Sciatic nerve (tissue), 2 donors: ENCODE measurements at regions of chr11 and their contacts with region 1.

Region 1: GRCh38 chr11:112724496-112724790 is 236.8 kb upstream of the NCAM1 start:
- DNase-seq: no peak
- ATAC-seq: no peak

Region 2: GRCh38 chr11:112665291-112665690 is 59.2 kb before region 1 on chr11:
- intact Hi-C with region 1: loop called (anchors 10 kb)
- DNase-seq: no peak
- ATAC-seq: no peak

Region 3: DNA sequence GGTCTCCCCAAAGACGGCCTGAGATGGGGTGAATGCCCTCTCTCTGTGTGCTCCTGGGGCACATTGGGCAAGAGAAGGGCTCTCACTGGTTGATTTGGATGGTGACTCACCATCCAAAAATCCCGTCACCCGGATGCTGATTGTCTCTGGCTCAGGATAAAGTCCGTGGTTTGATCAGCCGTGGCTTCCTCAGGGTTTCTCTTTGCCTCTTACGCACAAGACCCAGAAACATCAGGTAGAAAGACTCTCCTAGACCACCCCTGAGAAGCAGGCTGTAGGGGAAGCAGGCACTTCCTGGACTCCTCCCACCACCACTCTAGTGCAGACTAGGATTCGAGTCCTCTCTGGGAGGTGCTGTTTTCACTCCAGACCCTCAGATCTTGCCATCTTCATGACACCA is 60.7 kb after region 1 on chr11:
- intact Hi-C with region 1: no loop called
- DNase-seq: no peak
- ATAC-seq: peak; percentile 78

Region 4: DNA sequence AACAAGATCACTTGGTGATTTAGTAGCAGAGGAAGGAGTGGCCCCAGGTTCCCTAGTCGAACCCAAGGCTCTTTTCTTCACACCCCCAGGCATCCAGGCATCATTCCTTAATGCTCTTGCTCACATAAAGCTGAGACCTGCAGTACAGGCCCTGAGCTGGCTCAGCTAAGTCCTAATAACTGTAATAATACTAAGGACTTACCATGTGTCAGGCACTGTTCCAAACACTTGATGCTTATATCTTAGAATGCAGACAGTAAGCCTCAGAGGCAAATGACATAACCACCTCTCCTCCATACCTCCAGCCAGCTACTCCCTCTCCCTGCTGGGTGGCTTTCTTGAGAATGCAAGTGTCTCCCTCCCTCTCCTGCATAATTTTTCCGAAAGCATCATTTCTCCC is 696.4 kb after region 1 on chr11:
- intact Hi-C with region 1: no loop called
- DNase-seq: no peak
- ATAC-seq: no peak